ENCODE measurements at regions of chr1 and their contacts with region 1.

Region 1: DNA sequence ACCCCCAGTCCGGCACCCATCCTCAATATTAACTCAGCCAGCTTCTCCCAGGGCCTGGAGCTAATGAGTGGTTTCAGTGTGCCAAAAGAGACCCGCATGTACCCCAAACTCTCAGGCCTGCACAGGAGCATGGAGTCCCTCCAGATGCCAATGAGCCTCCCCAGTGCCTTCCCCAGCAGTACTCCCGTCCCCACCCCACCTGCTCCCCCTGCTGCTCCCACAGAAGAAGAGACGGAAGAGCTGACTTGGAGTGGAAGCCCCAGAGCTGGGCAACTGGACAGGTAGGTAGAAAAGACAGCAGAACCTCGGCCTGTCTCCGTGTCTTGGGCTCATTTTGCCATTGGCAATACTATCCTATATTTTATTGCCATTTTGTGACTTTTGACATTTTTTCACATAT is 45.4 kb upstream of the IPO9 start:
- DNase-seq: no peak
- H3K4me3 ChIP-seq: no peak overlapping the region
- H3K27ac ChIP-seq: no peak overlapping the region
- H3K4me1 ChIP-seq: peaks cover 27% of the 10 kb centered on the region
- H3K27me3 ChIP-seq: no peaks in the 10 kb centered on the region
- CTCF ChIP-seq: peak in 1 of 2 donors; percentile 5

Region 2: DNA sequence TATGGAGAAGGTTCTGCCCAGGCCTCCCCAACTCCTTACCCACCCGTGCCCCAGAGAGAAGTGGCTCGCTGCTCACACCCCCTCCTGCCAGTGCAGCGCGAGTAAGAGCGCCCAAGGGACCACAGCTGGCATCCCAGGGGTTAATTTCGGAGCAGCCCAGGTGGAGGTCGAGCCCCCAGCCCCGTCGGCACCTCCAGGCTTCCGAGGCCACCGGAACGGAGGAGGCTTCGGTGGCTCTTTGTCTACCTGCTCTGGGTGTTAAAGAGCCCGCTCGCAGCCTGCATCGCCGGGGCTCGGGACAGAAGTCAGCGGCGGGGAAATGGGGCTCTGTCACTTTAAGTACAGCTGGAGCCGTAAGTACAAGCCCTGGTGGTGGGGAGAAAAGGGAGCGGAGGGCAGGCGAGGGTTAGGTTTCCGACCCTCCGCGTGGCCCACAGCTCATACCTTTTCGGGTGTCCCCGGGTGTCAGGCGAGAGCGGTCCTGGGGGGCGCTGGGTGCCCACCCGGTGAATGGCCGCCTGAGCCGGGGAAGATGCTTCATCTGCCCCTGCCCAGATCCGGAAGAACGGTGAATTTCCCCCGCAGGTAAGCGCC is 44.0 kb before region 1 on chr1:
- CTCF ChIA-PET with region 1: no interaction called
- dilution Hi-C with region 1: no loop called
- in situ Hi-C with region 1: no loop called
- intact Hi-C with region 1: loop called (anchors 1 kb)
- DNase-seq: peak; percentile 75
- H3K4me3 ChIP-seq: peak overlapping the region; percentile 68 to 93 (median 88)
- H3K27ac ChIP-seq: peak overlapping the region; percentile 63
- H3K4me1 ChIP-seq: peaks cover 28% of the 10 kb centered on the region
- H3K27me3 ChIP-seq: no peaks in the 10 kb centered on the region
- CTCF ChIP-seq: peak in 1 of 2 donors; percentile 16

Region 3: DNA sequence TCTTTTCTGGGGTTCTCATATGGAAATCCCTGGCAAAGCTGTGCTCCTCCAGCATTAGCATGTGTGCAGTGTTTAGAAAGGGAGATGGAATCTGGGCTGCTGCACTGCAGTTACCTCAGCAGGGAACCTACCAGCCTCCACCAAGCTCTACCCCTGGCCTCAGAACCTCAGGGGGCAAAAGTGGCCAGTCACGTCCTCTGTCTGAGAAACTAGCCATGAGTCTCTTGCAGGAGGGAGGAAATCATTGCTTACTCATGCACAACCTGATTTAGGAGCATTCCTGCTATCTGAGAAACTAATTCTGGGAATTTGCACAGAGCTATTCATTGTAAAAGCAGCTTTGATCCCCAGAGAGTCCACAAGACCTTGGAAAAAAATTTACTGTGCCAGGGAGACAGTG is 35.2 kb before region 1 on chr1:
- CTCF ChIA-PET with region 1: no interaction called
- dilution Hi-C with region 1: no loop called
- in situ Hi-C with region 1: no loop called
- intact Hi-C with region 1: loop called (anchors 2 kb)
- DNase-seq: peak; percentile 64
- H3K4me3 ChIP-seq: no peak overlapping the region
- H3K27ac ChIP-seq: no peak overlapping the region
- H3K4me1 ChIP-seq: peaks cover 60% of the 10 kb centered on the region
- H3K27me3 ChIP-seq: no peaks in the 10 kb centered on the region
- CTCF ChIP-seq: no peak

Region 4: DNA sequence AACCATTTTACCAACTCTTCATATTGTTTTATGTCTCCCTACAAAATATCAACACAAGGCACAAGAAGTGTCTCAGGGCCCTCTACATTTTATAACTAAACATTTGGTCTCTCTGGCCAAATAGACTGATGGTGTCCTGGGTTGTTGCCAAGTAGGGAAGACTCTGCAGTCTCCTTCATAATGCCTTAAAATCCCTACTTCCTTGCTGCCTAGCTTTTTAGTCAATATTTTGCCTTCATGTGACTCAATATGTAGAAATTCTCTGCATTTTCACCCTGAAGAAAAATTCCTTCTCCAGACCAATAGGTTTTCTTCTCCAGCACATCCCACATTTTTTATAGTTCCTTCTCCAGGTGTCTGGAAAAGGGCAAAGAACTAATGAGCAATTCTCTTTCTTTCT is 27.2 kb before region 1 on chr1:
- CTCF ChIA-PET with region 1: no interaction called
- dilution Hi-C with region 1: no loop called
- in situ Hi-C with region 1: no loop called
- intact Hi-C with region 1: loop called (anchors 1 kb)
- DNase-seq: no peak
- H3K4me3 ChIP-seq: no peak overlapping the region
- H3K27ac ChIP-seq: peak overlapping the region; percentile 54
- H3K4me1 ChIP-seq: peaks cover 57% of the 10 kb centered on the region
- H3K27me3 ChIP-seq: no peaks in the 10 kb centered on the region
- CTCF ChIP-seq: no peak